ENCODE measurements at regions of chr9 and their contacts with region 1.

Region 1: GRCh38 chr9:103152473-103152872 is 157.3 kb downstream of the CYLC2 start:
- DNase-seq: peak; percentile 5
- H3K4me3 ChIP-seq: no peak overlapping the region
- H3K27ac ChIP-seq: no peak overlapping the region
- H3K4me1 ChIP-seq: no peaks in the 10 kb centered on the region
- H3K27me3 ChIP-seq: no peaks in the 10 kb centered on the region
- CTCF ChIP-seq: no peak
- EP300 ChIP-seq: no peak
- RAD21 ChIP-seq: peak; percentile 70

Region 2: DNA sequence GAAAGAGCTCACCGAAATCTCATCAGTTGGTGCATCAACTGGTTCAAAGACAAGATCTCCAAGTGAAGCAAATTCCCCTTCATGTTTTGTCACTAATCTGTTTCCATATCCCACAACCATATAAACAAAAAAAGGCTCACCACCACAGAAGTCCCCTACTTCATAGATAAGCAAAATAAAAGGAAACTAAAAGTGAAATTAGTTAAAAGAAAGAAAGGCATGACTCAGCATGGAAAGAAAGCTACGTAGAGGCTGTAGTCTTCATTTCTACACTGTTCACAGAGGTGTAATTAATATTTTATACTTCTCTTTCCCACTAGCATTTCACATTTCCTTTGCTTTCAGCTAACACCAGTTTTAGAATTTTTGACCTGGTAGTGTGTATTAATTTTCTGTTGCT is 50.7 kb after region 1 on chr9:
- CTCF ChIA-PET with region 1: no interaction called
- POLR2A ChIA-PET with region 1: no interaction called
- DNase-seq: no peak
- H3K4me3 ChIP-seq: no peak overlapping the region
- H3K27ac ChIP-seq: no peak overlapping the region
- H3K4me1 ChIP-seq: no peaks in the 10 kb centered on the region
- H3K27me3 ChIP-seq: no peaks in the 10 kb centered on the region
- CTCF ChIP-seq: no peak
- EP300 ChIP-seq: no peak
- RAD21 ChIP-seq: no peak

Region 3: GRCh38 chr9:103319979-103320378 is 167.5 kb after region 1 on chr9:
- CTCF ChIA-PET with region 1: interaction called, 23 read pairs
- POLR2A ChIA-PET with region 1: no interaction called
- DNase-seq: peak; percentile 10
- H3K4me3 ChIP-seq: no peak overlapping the region
- H3K27ac ChIP-seq: no peak overlapping the region
- H3K4me1 ChIP-seq: no peaks in the 10 kb centered on the region
- H3K27me3 ChIP-seq: no peaks in the 10 kb centered on the region
- CTCF ChIP-seq: peak; percentile 40
- EP300 ChIP-seq: no peak
- RAD21 ChIP-seq: peak; percentile 47

Measured in SK-N-SH (cell line).